Naive thymus-derived CD4-positive, alpha-beta T cell (primary cell): ENCODE measurements at regions of chr1 and their contacts with region 1.

Region 1: GRCh38 chr1:243343970-243344937 is 88.4 kb downstream of the SDCCAG8 start:
- DNase-seq: peak in 7 of 9 donors; percentile 22 to 65 (median 51)
- ATAC-seq: peak; percentile 64
- H3K4me3 ChIP-seq: no peak overlapping the region
- H3K4me3 Mint-ChIP-seq: no peak overlapping the region
- H3K27ac ChIP-seq: no peak overlapping the region
- H3K27ac Mint-ChIP-seq: no peak overlapping the region
- H3K4me1 ChIP-seq: no peaks in the 10 kb centered on the region
- H3K4me1 Mint-ChIP-seq: peaks cover 0 to 12% (median 3%) of the 10 kb centered on the region in 7 donors
- H3K27me3 ChIP-seq: no peaks in the 10 kb centered on the region
- H3K27me3 Mint-ChIP-seq: no peaks in the 10 kb centered on the region

Region 2: DNA sequence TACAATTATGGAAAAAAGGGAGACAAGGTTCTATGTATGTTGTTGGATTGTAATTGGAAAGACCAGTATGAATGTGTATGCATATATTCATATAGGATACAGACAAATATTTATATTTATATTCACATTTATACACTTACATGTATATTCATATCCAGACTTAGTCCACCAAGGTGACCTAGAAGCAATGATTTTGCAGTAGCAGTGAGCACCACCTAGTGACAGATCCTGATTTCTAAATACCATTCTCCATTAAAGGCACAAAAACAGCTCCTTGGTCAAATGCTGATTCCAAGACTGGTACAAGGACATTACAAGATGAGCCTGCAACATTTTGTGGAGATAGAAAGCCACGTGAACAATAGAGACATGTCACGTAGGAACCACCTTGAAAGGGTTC is 65.0 kb after region 1 on chr1:
- CTCF ChIA-PET with region 1: no interaction called
- POLR2A ChIA-PET with region 1: no interaction called
- intact Hi-C with region 1: loop called in 1 of 2 experiments (anchors 1 kb)
- DNase-seq: no peak
- ATAC-seq: no peak
- H3K4me3 ChIP-seq: no peak overlapping the region
- H3K4me3 Mint-ChIP-seq: no peak overlapping the region
- H3K27ac ChIP-seq: no peak overlapping the region
- H3K27ac Mint-ChIP-seq: no peak overlapping the region
- H3K4me1 ChIP-seq: no peaks in the 10 kb centered on the region
- H3K4me1 Mint-ChIP-seq: peaks cover 0 to 18% (median 10%) of the 10 kb centered on the region in 7 donors
- H3K27me3 ChIP-seq: no peaks in the 10 kb centered on the region
- H3K27me3 Mint-ChIP-seq: no peaks in the 10 kb centered on the region

Region 3: GRCh38 chr1:243596431-243597062 is 252.3 kb after region 1 on chr1:
- CTCF ChIA-PET with region 1: no interaction called
- POLR2A ChIA-PET with region 1: no interaction called
- intact Hi-C with region 1: loop called in 1 of 2 experiments (anchors 5 kb)
- DNase-seq: peak in 1 of 9 donors; percentile 36
- ATAC-seq: peak; percentile 81
- H3K4me3 ChIP-seq: no peak overlapping the region
- H3K4me3 Mint-ChIP-seq: peak overlapping the region in 4 of 10 donors; percentile 6 to 73 (median 44)
- H3K27ac ChIP-seq: no peak overlapping the region
- H3K27ac Mint-ChIP-seq: peak overlapping the region in 5 of 9 donors; percentile 28 to 89 (median 40)
- H3K4me1 ChIP-seq: peaks cover 4 to 19% of the 10 kb centered on the region in 2 donors
- H3K4me1 Mint-ChIP-seq: peaks cover 23 to 48% (median 32%) of the 10 kb centered on the region in 7 donors
- H3K27me3 ChIP-seq: no peaks in the 10 kb centered on the region
- H3K27me3 Mint-ChIP-seq: no peaks in the 10 kb centered on the region

Region 4: DNA sequence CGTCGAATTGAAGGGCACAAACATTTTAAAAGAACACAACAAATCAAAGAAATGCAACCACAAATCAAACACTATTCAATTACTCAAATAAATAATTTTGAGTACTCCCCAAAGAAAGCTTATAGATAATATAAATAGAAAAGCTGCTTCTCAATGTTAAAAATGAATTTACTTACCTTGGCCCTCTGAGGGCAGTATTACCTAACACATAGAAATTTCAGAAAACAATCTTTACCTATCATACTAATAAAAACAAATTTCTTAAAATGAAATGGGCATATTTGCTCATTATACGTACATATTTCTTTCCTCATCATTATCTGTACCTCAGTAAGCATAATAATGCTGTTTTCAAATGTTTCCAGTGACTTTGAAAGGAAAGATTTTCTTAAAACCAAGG is 364.0 kb after region 1 on chr1:
- CTCF ChIA-PET with region 1: no interaction called
- POLR2A ChIA-PET with region 1: no interaction called
- intact Hi-C with region 1: loop called in 1 of 2 experiments (anchors 1 kb)
- DNase-seq: peak in 5 of 9 donors; percentile 4 to 36 (median 15)
- ATAC-seq: no peak
- H3K4me3 ChIP-seq: no peak overlapping the region
- H3K4me3 Mint-ChIP-seq: no peak overlapping the region
- H3K27ac ChIP-seq: no peak overlapping the region
- H3K27ac Mint-ChIP-seq: no peak overlapping the region
- H3K4me1 ChIP-seq: no peaks in the 10 kb centered on the region
- H3K4me1 Mint-ChIP-seq: peaks cover 5 to 40% (median 27%) of the 10 kb centered on the region in 7 donors
- H3K27me3 ChIP-seq: no peaks in the 10 kb centered on the region
- H3K27me3 Mint-ChIP-seq: no peaks in the 10 kb centered on the region

Region 5: GRCh38 chr1:243819438-243819839 is 475.2 kb after region 1 on chr1:
- CTCF ChIA-PET with region 1: no interaction called
- POLR2A ChIA-PET with region 1: no interaction called
- intact Hi-C with region 1: no loop called
- DNase-seq: no peak
- ATAC-seq: no peak
- H3K4me3 ChIP-seq: no peak overlapping the region
- H3K4me3 Mint-ChIP-seq: no peak overlapping the region
- H3K27ac ChIP-seq: no peak overlapping the region
- H3K27ac Mint-ChIP-seq: no peak overlapping the region
- H3K4me1 ChIP-seq: no peaks in the 10 kb centered on the region
- H3K4me1 Mint-ChIP-seq: peaks cover 9 to 49% (median 25%) of the 10 kb centered on the region in 7 donors
- H3K27me3 ChIP-seq: no peaks in the 10 kb centered on the region
- H3K27me3 Mint-ChIP-seq: no peaks in the 10 kb centered on the region

Region 6: DNA sequence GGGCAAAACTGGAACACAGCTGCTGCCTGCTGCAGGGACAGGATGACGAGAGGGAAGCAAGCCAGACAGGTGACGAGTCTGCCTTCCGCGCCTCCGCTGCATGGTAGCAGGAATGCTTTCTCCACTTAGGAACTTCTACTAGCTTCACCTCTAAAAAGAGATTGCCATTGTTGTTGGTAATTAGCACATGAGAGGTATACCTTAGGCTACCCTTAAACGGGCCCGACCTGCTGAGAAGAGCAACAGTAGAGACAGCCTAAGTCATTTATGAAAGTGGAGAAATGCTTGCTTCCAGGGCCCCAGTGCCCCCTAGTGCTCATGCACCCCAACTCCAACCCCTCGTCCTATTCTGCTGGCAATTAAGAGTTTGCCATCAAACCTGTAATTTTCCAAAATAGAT is 602.7 kb after region 1 on chr1:
- CTCF ChIA-PET with region 1: interaction called, 3 read pairs
- POLR2A ChIA-PET with region 1: no interaction called
- intact Hi-C with region 1: loop called (anchors 1 kb)
- DNase-seq: peak in 6 of 9 donors; percentile 11 to 52 (median 38)
- ATAC-seq: peak; percentile 76
- H3K4me3 ChIP-seq: no peak overlapping the region
- H3K4me3 Mint-ChIP-seq: no peak overlapping the region
- H3K27ac ChIP-seq: no peak overlapping the region
- H3K27ac Mint-ChIP-seq: peak overlapping the region in 1 of 9 donors; percentile 17
- H3K4me1 ChIP-seq: no peaks in the 10 kb centered on the region
- H3K4me1 Mint-ChIP-seq: no peaks in the 10 kb centered on the region
- H3K27me3 ChIP-seq: no peaks in the 10 kb centered on the region
- H3K27me3 Mint-ChIP-seq: peaks cover 0 to 8% (median 5%) of the 10 kb centered on the region in 5 donors

Region 7: GRCh38 chr1:244112636-244113035 is 768.4 kb after region 1 on chr1:
- CTCF ChIA-PET with region 1: no interaction called
- POLR2A ChIA-PET with region 1: no interaction called
- intact Hi-C with region 1: loop called in 1 of 2 experiments (anchors 1 kb)
- DNase-seq: no peak
- ATAC-seq: no peak
- H3K4me3 ChIP-seq: no peak overlapping the region
- H3K4me3 Mint-ChIP-seq: no peak overlapping the region
- H3K27ac ChIP-seq: no peak overlapping the region
- H3K27ac Mint-ChIP-seq: no peak overlapping the region
- H3K4me1 ChIP-seq: no peaks in the 10 kb centered on the region
- H3K4me1 Mint-ChIP-seq: no peaks in the 10 kb centered on the region
- H3K27me3 ChIP-seq: no peaks in the 10 kb centered on the region
- H3K27me3 Mint-ChIP-seq: peaks cover under 1 to 8% (median 5%) of the 10 kb centered on the region in 5 donors

Region 8: DNA sequence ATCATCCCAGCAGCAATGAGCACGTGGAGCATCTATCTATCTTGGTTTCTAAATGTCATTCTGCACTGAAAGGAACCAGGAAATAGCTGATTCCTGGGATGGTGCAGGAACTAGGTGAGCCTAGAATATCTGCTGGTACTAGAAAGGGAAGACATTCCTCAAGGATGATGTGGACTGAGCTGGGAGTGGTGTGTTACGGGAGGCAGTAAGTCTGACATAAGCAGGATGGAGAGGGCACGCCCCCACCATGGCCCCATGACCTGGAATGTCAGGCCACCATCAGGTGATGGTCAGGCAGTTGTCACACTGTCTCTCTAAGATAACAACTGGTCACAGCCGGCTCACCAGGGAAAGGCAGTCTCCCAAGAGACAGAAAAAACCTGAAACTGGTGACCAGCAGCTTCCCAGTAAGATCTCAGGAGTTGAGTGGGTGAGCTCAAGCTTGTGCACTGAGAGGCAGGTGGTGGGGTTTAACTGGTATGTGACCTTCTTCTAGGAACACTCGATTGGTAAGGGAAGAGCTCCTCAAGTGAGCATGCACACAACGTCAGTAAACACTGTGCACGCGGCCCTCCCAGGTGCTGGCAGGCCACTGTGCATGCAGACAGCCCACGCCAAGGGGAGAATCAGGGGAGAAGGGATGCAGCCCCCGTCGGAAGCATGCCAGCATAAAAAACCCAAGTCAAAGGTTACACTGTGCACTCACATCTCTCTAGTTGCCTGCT is 958.8 kb after region 1 on chr1:
- CTCF ChIA-PET with region 1: interaction called, 20 read pairs
- POLR2A ChIA-PET with region 1: no interaction called
- intact Hi-C with region 1: loop called (anchors 1 kb)
- DNase-seq: no peak
- ATAC-seq: no peak
- H3K4me3 ChIP-seq: no peak overlapping the region
- H3K4me3 Mint-ChIP-seq: no peak overlapping the region
- H3K27ac ChIP-seq: no peak overlapping the region
- H3K27ac Mint-ChIP-seq: peak overlapping the region in 3 of 9 donors; percentile 4 to 43 (median 7)
- H3K4me1 ChIP-seq: peaks cover 0 to 3% of the 10 kb centered on the region in 2 donors
- H3K4me1 Mint-ChIP-seq: peaks cover 5 to 13% (median 7%) of the 10 kb centered on the region in 7 donors
- H3K27me3 ChIP-seq: no peaks in the 10 kb centered on the region
- H3K27me3 Mint-ChIP-seq: peaks cover 0 to 2% (median 0%) of the 10 kb centered on the region in 5 donors